Posterior cingulate gyrus (tissue), 11 donors: ENCODE measurements at regions of chr12 and their contacts with region 1.

Region 1: GRCh38 chr12:121536899-121537813 is 43.7 kb downstream of the KDM2B start:
- DNase-seq: peak; percentile 67 to 96 (median 80)

Region 2: DNA sequence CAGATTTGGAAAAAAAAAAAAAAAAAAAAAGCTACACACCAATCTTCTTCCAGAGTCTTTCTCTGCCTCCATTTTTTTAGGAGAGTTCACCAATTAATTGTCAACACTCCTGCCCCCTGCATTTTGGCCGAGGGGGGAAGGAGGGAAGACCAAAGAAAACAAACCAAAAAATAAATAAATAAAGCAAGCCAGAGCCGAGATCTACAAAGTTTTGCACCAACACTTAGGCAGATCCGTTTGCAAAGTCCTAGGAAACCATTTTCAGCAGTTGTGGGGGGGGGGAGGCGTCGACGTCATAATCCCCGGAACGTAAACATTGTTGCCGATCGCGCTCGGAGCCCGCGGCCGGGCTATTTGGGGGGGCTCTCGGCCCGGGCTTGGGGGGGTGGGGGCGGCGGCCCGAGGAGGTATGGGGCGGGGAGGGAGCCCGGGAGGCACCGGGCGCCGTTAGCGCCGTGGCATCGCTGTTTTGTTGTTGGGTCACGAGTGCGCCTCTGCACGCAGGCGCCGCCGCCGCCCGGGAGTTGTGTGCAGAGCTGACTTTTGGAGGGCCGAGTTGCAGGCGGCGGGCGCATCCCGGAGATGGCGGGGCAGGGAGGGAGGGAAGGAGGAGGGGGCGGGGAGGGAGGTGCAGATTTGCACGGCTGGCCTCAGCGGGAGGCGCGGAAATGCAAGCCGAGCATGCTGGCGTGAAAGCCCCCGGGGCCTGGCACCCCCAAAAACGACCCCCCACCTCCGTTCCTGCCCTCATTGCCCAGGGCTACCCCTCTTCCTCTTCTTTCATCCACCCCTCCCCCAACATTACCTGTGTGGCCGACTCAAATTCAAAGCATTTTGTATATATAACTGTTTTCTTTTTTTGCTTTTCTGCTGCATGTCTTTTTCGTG is 43.1 kb after region 1 on chr12:
- intact Hi-C with region 1: loop called (anchors 5 kb)
- DNase-seq: peak; percentile 61 to 96 (median 76)